AG04450 (cell line): ENCODE measurements at regions of chr14 and their contacts with region 1.

Region 1: DNA sequence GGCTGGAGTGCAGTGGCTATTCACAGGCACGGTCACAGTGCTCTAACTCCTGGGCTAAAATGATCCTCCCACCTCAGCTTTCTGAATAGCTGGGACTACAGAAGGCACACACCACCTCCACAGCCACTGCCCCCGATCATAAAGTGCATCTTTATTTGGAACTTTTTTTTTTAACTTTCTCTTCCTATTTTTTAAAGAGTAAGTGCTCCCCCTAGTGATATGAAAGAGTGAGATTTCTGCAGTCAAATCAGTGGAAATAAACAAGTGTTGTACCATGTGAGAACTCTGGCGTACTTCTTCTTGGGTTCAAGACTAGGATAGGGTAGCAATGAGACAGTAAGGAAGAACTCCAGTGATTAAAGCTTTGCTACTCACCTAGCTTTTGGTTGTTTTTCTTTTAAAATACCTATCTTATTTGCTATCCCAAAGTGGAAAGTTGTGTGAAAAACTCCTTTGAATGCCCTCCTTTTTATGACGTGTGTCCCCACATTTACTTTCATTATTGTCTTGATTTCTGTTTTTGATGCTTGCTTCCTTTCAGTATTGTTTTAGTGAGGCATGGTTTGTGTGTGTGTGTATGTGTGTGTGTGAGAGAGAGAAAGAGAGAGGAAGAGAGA is 6.6 kb downstream of the PPP4R4 start:
- DNase-seq: no peak
- H3K4me3 ChIP-seq: no peak overlapping the region
- H3K27ac ChIP-seq: no peak overlapping the region
- H3K27me3 ChIP-seq: peaks cover 11% of the 10 kb centered on the region
- CTCF ChIP-seq: peak; percentile 70

Region 2: DNA sequence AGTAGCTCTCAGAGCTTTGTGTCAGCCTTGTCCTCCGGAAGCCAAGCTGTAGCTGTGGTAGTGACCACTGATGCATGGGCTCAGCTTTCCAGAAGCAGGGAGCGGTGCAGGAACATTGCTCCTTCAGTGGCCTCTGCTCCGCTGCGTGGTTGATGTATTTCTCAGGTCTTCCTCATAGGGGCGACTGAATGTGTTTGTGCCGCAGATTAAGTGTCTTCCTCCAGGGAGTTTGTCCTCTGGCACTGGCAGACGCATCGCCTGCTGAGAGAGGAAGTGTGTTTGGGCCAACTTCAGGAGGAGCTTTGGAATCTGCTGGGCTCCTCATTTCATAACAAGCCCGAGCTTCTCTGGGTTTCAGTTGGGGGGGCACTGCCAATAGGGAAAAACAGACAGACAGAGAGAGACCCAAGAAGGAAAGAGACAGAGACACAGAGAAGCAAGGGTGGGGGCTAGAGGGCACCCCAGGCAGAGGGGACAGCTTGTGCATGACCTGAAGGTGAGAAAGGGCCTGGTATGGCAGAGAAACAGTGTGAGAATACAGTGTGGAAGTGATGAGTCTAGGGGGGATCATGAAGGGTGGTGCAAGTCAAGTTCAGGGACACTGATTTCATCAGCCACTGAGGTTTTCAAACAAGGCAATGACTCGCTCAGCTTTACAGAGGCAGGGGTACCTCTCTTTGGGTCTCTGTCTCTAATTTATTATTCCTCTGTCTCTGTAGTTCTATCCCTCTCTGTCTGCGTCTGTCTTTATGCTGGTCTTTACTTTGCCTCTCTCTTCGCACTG is 323.1 kb before region 1 on chr14:
- CTCF ChIA-PET with region 1: no interaction called
- POLR2A ChIA-PET with region 1: no interaction called
- DNase-seq: no peak
- H3K4me3 ChIP-seq: no peak overlapping the region
- H3K27ac ChIP-seq: no peak overlapping the region
- H3K27me3 ChIP-seq: peaks cover 2% of the 10 kb centered on the region
- CTCF ChIP-seq: no peak

Region 3: DNA sequence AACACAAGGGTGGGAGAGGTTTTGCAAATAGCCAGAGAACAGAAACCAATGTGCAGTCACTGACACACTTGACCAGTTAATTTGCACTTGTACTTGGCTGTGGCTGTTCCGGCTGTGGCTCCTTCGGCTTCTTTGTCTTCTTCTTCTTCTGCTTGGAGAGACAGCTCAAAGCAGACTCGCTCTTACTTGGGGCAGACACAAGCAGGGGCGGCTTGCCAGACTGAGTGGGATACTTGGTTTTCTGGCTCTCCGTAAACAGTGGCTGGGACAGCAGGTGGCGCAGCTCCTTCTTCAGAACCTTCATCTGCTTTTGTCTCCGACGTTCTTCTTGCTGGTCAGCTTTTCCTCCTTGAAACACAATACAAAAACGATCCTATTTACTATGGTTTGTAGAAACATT is 129.6 kb before region 1 on chr14:
- CTCF ChIA-PET with region 1: interaction called, 22 read pairs
- POLR2A ChIA-PET with region 1: no interaction called
- DNase-seq: peak; percentile 15
- H3K4me3 ChIP-seq: no peak overlapping the region
- H3K27ac ChIP-seq: no peak overlapping the region
- H3K27me3 ChIP-seq: no peaks in the 10 kb centered on the region
- CTCF ChIP-seq: peak; percentile 57

Region 4: GRCh38 chr14:94193776-94194175 is 13.0 kb after region 1 on chr14:
- CTCF ChIA-PET with region 1: interaction called, 37 read pairs
- POLR2A ChIA-PET with region 1: no interaction called
- DNase-seq: no peak
- H3K4me3 ChIP-seq: no peak overlapping the region
- H3K27ac ChIP-seq: no peak overlapping the region
- H3K27me3 ChIP-seq: no peaks in the 10 kb centered on the region
- CTCF ChIP-seq: no peak

Region 5: DNA sequence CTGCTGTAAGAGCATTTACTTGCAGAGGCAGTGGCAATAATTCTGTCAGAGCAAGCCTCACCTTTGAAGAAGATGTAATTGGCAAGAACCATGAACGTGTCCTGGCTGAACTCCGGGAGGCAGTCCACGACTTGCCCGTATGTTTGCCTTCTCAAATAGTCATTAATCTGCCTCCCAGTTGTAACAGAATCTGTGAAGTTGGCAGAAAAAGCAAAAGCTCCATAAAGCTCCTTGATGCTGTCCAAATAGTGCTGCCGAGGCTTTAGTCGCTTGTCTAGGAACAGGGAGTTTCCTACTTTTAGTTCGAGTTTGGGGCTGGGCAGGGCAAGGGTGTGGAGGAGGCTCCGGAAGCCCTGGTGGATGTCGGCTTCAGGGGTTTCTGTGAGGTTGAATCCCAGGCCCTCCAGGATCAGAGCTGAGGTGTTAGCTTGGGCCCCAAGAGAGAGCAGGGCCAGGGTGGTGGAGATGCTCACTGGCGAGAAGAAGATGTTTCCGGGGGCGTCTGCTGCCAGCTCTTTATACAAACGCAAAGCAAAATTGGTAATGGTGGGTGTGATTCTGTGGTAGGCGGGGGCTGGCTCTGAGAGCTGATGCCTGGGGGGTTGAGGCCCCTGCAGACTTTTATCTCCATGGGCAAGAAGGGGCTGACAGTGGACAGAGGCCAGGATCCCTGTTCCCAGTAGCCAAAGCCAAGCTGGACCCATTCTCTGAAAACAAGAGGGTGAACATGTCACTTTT is 267.5 kb after region 1 on chr14:
- CTCF ChIA-PET with region 1: no interaction called
- POLR2A ChIA-PET with region 1: no interaction called
- DNase-seq: no peak
- H3K4me3 ChIP-seq: no peak overlapping the region
- H3K27ac ChIP-seq: no peak overlapping the region
- H3K27me3 ChIP-seq: peaks cover 6% of the 10 kb centered on the region
- CTCF ChIP-seq: no peak

Region 6: DNA sequence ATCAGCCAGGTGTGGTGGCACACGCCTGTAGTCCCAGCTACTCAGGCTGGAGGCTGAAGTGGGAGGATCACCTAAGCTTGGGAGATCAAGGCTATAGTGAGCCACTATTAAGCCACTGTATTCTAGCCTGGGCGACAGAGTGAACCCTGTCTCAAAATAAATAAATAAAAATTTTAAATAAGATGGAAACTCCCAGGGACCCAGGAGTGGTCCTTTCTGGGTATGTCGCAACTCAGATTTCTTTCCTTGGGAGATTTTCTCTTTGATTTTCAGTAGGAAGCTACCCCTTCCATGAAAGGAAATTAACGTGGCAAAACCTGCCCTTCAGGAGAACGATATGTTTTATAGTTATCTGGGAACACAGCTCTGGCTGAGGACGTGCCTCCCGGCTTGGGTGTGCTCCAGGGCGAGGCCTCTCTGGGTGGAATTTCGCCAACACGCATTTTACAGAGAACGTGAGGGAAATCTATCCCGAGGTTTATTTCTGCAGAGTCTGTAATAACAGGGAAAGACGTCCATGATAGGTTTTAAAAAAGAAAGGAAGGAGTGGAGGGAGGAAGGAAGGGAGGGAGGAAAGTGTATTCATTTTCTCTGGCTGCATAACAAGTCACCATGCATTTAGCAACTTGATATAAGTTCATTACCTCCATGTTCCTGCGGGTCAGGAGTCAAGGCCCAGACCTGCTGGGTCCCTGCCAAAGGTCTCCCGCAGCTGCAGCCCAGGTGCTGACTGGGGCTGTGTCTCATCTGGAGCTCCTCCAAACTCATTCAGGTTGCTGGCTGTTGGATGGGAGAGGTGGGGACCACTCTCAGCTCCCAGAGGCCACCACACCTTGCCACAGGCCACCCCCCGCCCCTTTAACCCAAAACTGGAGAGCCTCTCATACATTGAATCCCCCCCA is 669.8 kb after region 1 on chr14:
- CTCF ChIA-PET with region 1: no interaction called
- POLR2A ChIA-PET with region 1: no interaction called
- DNase-seq: no peak
- H3K4me3 ChIP-seq: no peak overlapping the region
- H3K27ac ChIP-seq: no peak overlapping the region
- H3K27me3 ChIP-seq: no peaks in the 10 kb centered on the region
- CTCF ChIP-seq: no peak